Left cardiac atrium (tissue), 4 donors: ENCODE measurements at regions of chr9 and their contacts with region 1.

Region 1: DNA sequence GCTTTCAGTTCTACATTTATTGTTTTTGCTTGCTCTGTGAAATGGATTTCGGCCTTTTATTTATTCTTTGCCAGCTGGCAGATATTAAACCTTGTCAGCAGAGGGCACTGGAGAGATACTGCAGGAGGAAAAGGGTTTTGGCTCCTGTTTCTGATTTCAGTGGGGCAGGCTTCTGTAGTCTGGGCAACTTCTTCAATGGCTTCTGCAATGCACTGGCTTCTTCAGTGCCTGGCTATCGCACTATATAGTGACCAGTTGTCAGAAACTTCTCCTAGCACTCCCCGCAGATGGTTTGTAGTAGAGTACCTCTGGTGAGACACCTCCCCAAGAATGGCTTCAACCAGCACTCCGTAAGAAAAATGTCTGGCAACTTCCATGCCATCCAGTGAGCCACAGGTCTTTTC is 3.2 kb upstream of the NFX1 start:
- DNase-seq: no peak
- ATAC-seq: no peak

Region 2: DNA sequence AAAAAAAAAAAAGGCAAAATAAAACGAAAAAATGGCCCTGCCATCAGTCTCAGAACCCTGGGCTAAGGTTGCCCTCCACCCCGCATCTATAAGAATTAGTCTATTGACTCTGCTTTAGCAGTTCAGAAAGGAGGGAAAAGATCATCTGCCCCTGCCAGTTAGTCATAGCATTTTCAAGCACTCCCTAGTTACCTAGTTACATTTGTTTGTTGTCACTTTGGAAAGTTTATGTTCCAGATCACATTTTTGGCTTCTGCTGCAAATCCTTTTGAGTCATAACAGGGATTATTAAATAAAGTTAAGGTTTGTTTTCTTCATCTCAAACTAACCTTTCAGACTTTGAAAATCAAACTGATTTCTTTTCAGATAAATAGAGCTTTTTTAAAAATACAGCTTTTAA is 63.2 kb after region 1 on chr9:
- intact Hi-C with region 1: no loop called
- DNase-seq: no peak
- ATAC-seq: peak in 1 of 2 donors; percentile 71

Region 3: GRCh38 chr9:33466565-33467495 is 179.7 kb after region 1 on chr9:
- intact Hi-C with region 1: loop called in 1 of 2 experiments (anchors 10 kb)
- DNase-seq: peak; percentile 62
- ATAC-seq: peak; percentile 59 to 65